Activated CD4-positive, alpha-beta memory T cell treated with anti-CD3 and anti-CD28 coated beads for 36 hours (primary cell): ENCODE measurements at regions of chr3 and their contacts with region 1.

Region 1: GRCh38 chr3:114152519-114153151 is 26.2 kb downstream of the DRD3 start:
- DNase-seq: peak; percentile 90
- H3K4me3 Mint-ChIP-seq: peak overlapping the region; percentile 25
- H3K27ac Mint-ChIP-seq: peak overlapping the region; percentile 18
- H3K4me1 Mint-ChIP-seq: peaks cover 8% of the 10 kb centered on the region
- H3K27me3 Mint-ChIP-seq: no peaks in the 10 kb centered on the region

Region 2: GRCh38 chr3:113947372-113948014 is 205.1 kb before region 1 on chr3 and contains the start of gene ZDHHC23:
- CTCF ChIA-PET with region 1: no interaction called
- POLR2A ChIA-PET with region 1: no interaction called
- intact Hi-C with region 1: no loop called
- DNase-seq: peak; percentile 71
- H3K4me3 Mint-ChIP-seq: peak within 1 kb of the TSS; percentile 74
- H3K27ac Mint-ChIP-seq: peak within 1 kb of the TSS; percentile 52
- H3K4me1 Mint-ChIP-seq: peaks cover 12% of the 10 kb centered on the region
- H3K27me3 Mint-ChIP-seq: peaks cover 14% of the 10 kb centered on the region
- total RNA-seq, gene ZDHHC23: 5.4 to 6.6 TPM

Region 3: GRCh38 chr3:114133947-114134346 is 18.7 kb before region 1 on chr3:
- CTCF ChIA-PET with region 1: no interaction called
- POLR2A ChIA-PET with region 1: no interaction called
- intact Hi-C with region 1: no loop called
- DNase-seq: no peak
- H3K4me3 Mint-ChIP-seq: no peak overlapping the region
- H3K27ac Mint-ChIP-seq: no peak overlapping the region
- H3K4me1 Mint-ChIP-seq: no peaks in the 10 kb centered on the region
- H3K27me3 Mint-ChIP-seq: no peaks in the 10 kb centered on the region

Region 4: DNA sequence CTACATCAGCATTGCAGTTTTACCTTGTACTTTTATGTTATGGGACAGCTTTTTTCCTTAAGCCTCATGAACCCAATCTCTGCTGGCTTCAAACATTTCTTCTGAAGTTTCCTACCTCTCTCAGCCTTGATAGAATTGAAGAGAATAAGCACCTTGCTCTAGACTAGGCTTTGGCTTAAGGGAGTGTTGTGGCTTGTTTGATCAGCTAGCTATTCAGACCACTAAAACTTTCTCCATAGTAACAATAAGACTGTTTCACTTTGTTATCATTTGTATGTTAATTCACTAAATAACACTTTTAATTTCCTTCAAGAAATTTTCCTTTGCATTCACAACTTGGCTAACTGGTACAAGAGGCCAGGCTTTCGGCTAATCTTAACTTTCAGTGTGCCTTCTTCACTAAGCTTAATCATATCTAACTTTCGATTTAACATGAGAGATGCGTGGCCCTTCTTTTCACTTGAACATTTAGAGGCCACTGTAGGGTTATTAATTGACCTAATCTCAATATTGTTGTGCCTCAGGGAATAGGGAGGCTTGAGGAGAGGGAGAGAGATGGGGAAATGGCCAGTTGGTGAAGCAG is 133.1 kb after region 1 on chr3:
- CTCF ChIA-PET with region 1: interaction called, 15 read pairs
- POLR2A ChIA-PET with region 1: no interaction called
- intact Hi-C with region 1: loop called (anchors 2 kb)
- DNase-seq: no peak
- H3K4me3 Mint-ChIP-seq: peak overlapping the region; percentile 57
- H3K27ac Mint-ChIP-seq: peak overlapping the region; percentile 91
- H3K4me1 Mint-ChIP-seq: peaks cover 33% of the 10 kb centered on the region
- H3K27me3 Mint-ChIP-seq: no peaks in the 10 kb centered on the region

Region 5: DNA sequence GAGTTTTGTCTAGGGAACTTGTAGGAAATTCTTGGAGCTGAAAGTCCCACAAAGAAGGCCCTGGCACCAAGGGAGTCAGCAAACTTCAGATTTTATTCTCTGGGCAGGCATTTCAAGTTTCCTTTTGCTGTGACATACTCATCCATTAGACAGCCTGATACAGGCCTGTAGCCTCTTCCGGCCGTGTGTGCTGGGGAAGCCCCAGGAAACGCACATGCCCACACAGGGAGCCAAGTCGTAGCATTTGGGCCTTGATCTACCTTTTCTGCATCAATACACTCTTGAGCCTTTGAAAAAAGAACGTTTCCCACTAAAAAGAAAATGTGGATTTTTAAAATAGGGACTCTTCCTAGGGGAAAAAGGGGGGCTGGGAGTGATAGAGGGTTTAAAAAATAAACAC is 156.2 kb after region 1 on chr3:
- CTCF ChIA-PET with region 1: interaction called, 4 read pairs
- POLR2A ChIA-PET with region 1: no interaction called
- intact Hi-C with region 1: loop called (anchors 5 kb)
- DNase-seq: peak; percentile 83
- H3K4me3 Mint-ChIP-seq: peak overlapping the region; percentile 70
- H3K27ac Mint-ChIP-seq: peak overlapping the region; percentile 99
- H3K4me1 Mint-ChIP-seq: peaks cover 77% of the 10 kb centered on the region
- H3K27me3 Mint-ChIP-seq: no peaks in the 10 kb centered on the region

Region 6: DNA sequence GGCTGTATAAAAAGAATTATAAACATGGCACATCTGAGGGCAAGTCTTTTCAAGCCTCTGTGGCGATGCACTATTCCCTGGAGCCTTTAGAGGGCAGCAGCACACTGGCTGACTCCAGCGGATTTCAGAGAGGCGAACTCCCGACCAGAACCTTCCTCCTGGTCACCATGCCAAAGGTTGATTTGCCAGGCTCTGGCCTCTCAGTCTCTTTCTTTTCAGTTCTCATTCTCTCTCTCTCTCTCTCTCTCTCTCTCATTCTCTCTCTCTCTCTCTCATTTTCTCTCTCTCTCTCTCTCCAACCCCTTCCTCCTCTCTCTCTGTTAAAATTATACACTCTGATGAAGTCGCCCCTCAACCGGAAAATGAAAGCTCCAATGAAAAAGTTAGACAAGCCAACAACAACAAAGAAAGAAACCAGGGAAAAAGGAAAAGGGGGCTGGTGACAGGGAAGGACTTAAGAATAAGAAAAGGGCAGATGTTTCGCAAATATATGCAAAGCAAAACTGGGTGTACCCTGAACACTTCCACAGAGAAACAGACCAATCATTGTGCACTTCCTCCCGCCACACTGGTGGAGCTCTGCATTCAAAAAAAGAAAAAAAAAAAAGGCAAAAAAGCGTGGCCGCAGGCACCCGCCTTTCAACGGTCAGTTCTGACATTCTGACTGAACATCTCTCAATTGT is 231.4 kb after region 1 on chr3:
- CTCF ChIA-PET with region 1: interaction called, 6 read pairs
- POLR2A ChIA-PET with region 1: no interaction called
- intact Hi-C with region 1: loop called (anchors 2 kb)
- DNase-seq: peak; percentile 83
- H3K4me3 Mint-ChIP-seq: peak overlapping the region; percentile 68
- H3K27ac Mint-ChIP-seq: peak overlapping the region; percentile 77
- H3K4me1 Mint-ChIP-seq: peaks cover 6% of the 10 kb centered on the region
- H3K27me3 Mint-ChIP-seq: no peaks in the 10 kb centered on the region